IMR-90 (cell line): ENCODE measurements at regions of chr19 and their contacts with region 1.

Region 1: GRCh38 chr19:47348819-47349795 is at the start of gene DHX34:
- DNase-seq: peak; percentile 99
- ATAC-seq: peak; percentile 100
- H3K4me3 ChIP-seq: peak within 1 kb of the TSS; percentile 84
- H3K27ac ChIP-seq: peak within 1 kb of the TSS; percentile 65
- H3K4me1 ChIP-seq: no peaks in the 10 kb centered on the region; the same call in 1 of the 2 replicates
- H3K27me3 ChIP-seq: no peaks in the 10 kb centered on the region
- CTCF ChIP-seq: peak; percentile 98
- POLR2A ChIP-seq: peak; percentile 69
- RAD21 ChIP-seq: peak; percentile 24; the same call in 1 of the 2 replicates
- total RNA-seq, gene DHX34: 4.5 and 5.6 TPM in 2 replicates

Region 2: DNA sequence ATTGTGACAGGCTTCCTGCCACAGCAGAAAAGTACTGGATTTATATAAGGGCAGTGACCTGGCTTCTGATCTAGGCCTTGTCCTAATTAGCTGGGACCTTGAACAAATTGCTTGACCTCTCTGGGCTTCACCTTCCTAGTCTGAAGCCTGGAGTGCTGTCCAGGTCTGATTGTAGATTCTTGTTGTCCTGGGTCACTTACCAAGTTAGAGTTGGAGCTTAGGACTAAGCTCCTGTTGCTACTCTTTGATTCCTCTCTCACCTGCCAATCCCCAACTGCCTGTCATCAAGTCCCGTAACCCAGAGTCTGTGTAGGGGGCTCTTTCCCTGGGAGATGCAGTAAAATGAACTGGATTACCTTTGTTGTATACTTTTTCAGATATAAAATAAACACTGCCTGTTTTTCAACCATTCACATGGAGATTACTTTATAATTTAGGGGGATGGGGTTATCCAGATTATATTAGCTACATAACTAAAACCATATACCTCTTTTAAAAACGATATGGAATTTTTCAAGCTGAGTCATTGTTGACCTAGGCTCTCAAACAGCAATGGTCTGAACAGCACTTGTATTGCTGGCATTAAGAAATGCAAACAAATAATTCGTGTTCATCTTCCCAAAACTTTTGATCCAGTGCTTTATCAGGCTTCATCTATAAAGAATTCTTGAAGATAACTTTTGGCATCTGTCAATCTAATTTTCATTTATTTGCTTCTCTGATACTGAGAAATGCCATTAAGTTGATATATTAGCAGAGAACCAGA is 482.5 kb before region 1 on chr19:
- CTCF ChIA-PET with region 1: no interaction called
- POLR2A ChIA-PET with region 1: no interaction called
- dilution Hi-C with region 1: no loop called
- in situ Hi-C with region 1: no loop called
- intact Hi-C with region 1: no loop called
- DNase-seq: no peak
- ATAC-seq: peak; percentile 5; the same call in 1 of the 2 replicates
- H3K4me3 ChIP-seq: no peak overlapping the region
- H3K27ac ChIP-seq: no peak overlapping the region
- H3K4me1 ChIP-seq: peaks cover 23% of the 10 kb centered on the region
- H3K27me3 ChIP-seq: no peaks in the 10 kb centered on the region
- CTCF ChIP-seq: no peak
- POLR2A ChIP-seq: no peak
- RAD21 ChIP-seq: no peak

Region 3: DNA sequence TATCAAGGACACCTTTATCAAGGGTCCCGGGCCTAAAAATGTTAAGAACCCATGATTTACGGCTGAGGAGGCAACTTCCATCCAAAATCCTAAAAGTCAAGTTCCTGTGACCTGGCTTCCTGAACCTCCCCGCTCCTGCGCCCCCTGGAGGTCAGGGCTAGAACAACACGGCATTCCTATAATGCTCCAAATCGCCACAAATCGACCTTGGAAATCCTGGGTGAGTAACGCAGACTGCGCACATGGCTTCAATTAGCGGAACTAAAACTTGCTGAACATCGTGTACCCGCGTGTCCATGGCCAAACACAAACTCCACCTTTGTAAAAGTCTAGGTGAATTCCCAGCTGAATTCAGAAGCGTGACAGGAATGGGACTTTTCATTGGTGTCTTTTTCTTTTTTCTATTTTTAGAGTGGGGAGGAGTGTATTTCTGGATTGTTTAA is 43.8 kb before region 1 on chr19:
- CTCF ChIA-PET with region 1: no interaction called
- POLR2A ChIA-PET with region 1: no interaction called
- dilution Hi-C with region 1: no loop called
- in situ Hi-C with region 1: no loop called
- intact Hi-C with region 1: loop called (anchors 5 kb)
- DNase-seq: peak; percentile 90
- ATAC-seq: peak; percentile 98
- H3K4me3 ChIP-seq: peak overlapping the region; percentile 22; the same call in 1 of the 2 replicates
- H3K27ac ChIP-seq: 0 out of 2 replicates have a peak overlapping the region, but pooled peaks have one; percentile 22
- H3K4me1 ChIP-seq: no peaks in the 10 kb centered on the region
- H3K27me3 ChIP-seq: no peaks in the 10 kb centered on the region
- CTCF ChIP-seq: peak; percentile 88
- POLR2A ChIP-seq: no peak
- RAD21 ChIP-seq: peak; percentile 52

Region 4: GRCh38 chr19:47414469-47414868 is 65.4 kb after region 1 on chr19:
- CTCF ChIA-PET with region 1: no interaction called
- POLR2A ChIA-PET with region 1: no interaction called
- dilution Hi-C with region 1: no loop called
- in situ Hi-C with region 1: no loop called
- intact Hi-C with region 1: no loop called
- DNase-seq: no peak
- ATAC-seq: no peak
- H3K4me3 ChIP-seq: no peak overlapping the region
- H3K27ac ChIP-seq: no peak overlapping the region
- H3K4me1 ChIP-seq: peaks cover 9% of the 10 kb centered on the region
- H3K27me3 ChIP-seq: peaks cover 1% of the 10 kb centered on the region; the same call in 1 of the 2 replicates
- CTCF ChIP-seq: no peak
- POLR2A ChIP-seq: no peak
- RAD21 ChIP-seq: no peak